Endothelial cell of umbilical vein (primary cell): ENCODE measurements at regions of chr16 and their contacts with region 1.

Region 1: GRCh38 chr16:81873843-81874752 is 95.0 kb downstream of the PLCG2 start:
- DNase-seq: peak; percentile 63
- H3K4me3 ChIP-seq: no peak overlapping the region
- H3K27ac ChIP-seq: no peak overlapping the region
- H3K4me1 ChIP-seq: peaks cover 11% of the 10 kb centered on the region
- H3K27me3 ChIP-seq: no peaks in the 10 kb centered on the region
- CTCF ChIP-seq: peak; percentile 76 to 81
- POLR2A ChIP-seq: no peak

Region 2: DNA sequence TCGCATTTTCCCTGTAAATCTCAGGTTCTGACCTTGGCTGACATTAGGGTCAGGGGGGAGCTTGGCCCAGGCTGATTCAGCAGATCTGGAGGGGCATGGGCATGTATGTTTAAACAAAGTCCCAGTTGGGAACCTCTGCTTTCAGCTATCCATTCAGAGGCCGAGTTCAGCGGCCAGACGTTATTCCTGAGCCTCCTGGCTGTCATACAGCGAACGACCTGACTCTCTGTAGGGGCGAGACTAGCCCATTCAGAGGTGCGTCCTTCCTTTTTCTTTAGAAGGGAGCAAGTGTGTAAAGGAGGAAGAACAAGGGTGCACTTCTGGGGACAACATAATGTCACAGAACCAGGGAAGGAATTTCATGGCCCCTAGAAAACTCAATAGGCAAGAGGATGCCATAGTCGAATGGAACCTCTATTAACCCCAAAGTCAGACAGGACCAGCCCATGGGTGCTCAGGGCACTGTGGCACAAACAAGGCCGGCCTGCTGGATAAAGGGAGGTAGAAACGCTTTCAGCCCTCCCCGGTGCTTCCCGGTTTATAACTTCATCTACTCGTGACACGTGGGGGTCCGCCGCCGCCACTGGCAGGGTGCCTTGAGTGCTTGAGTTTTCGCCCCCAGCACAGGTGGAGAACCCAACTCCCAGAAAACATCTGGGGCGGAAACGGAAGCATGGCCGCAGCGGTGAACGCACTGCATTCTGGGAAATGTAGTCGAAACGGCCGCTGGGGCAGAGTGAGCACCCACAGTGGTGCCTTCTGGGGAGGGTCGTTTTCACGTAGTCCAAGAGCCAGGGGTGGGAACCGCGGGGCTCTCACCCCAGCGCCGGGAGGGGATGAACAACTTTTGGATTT is 128.2 kb before region 1 on chr16:
- CTCF ChIA-PET with region 1: interaction called, 6 read pairs
- POLR2A ChIA-PET with region 1: no interaction called
- dilution Hi-C with region 1: no loop called
- intact Hi-C with region 1: loop called (anchors 2 kb)
- DNase-seq: peak; percentile 59
- H3K4me3 ChIP-seq: peak overlapping the region in 2 of 3 experiments; percentile 6 to 7
- H3K27ac ChIP-seq: no peak overlapping the region
- H3K4me1 ChIP-seq: peaks cover 5% of the 10 kb centered on the region
- H3K27me3 ChIP-seq: no peaks in the 10 kb centered on the region
- CTCF ChIP-seq: no peak
- POLR2A ChIP-seq: peak; percentile 38

Region 3: DNA sequence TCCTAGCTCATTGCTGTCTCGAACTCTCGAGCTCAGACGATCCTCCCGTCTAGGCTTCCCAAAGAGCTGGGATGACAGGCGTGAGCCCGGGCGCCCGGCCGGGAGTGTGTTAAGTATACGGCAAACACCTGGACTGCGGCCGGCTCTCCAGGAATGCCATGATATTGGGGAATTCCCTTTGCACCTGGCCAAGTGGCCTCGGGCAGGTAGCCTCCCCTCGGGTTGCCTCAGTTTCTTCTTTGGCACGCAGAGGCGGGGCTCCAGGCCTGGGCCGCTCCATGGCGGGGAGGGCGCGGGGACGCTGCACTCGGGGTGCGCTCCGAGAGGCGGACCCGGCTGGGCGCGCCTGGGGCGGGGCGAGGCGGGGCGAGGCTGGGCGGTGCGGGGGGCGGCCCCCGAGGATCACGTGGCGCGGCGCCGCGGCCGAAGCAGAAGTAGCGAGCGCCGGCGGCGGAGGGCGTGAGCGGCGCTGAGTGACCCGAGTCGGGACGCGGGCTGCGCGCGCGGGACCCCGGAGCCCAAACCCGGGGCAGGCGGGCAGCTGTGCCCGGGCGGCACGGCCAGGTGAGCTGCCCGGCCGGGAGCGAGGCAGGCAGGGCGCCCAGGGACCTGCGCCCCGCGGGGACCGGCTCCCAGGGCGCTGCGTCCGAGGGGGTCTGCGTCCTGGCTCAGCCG is 95.1 kb before region 1 on chr16 and contains the start of gene PLCG2:
- CTCF ChIA-PET with region 1: interaction called, 27 read pairs
- POLR2A ChIA-PET with region 1: no interaction called
- dilution Hi-C with region 1: no loop called
- intact Hi-C with region 1: loop called (anchors 1 kb)
- DNase-seq: peak; percentile 60
- H3K4me3 ChIP-seq: peak within 1 kb of the TSS; percentile 59 to 85 (median 70)
- H3K27ac ChIP-seq: no peak within 1 kb of the TSS
- H3K4me1 ChIP-seq: peaks cover 6% of the 10 kb centered on the region
- H3K27me3 ChIP-seq: peaks cover 5% of the 10 kb centered on the region in 2 experiments
- CTCF ChIP-seq: no peak
- POLR2A ChIP-seq: no peak
- total RNA-seq, gene PLCG2: 9.6 and 13.6 TPM in 2 replicates

Region 4: GRCh38 chr16:81863630-81864352 is 10.3 kb before region 1 on chr16:
- CTCF ChIA-PET with region 1: interaction called, 46 read pairs
- POLR2A ChIA-PET with region 1: no interaction called
- dilution Hi-C with region 1: no loop called
- intact Hi-C with region 1: no loop called
- DNase-seq: no peak
- H3K4me3 ChIP-seq: no peak overlapping the region
- H3K27ac ChIP-seq: no peak overlapping the region
- H3K4me1 ChIP-seq: peaks cover 25% of the 10 kb centered on the region
- H3K27me3 ChIP-seq: no peaks in the 10 kb centered on the region
- CTCF ChIP-seq: no peak
- POLR2A ChIP-seq: no peak

Region 5: DNA sequence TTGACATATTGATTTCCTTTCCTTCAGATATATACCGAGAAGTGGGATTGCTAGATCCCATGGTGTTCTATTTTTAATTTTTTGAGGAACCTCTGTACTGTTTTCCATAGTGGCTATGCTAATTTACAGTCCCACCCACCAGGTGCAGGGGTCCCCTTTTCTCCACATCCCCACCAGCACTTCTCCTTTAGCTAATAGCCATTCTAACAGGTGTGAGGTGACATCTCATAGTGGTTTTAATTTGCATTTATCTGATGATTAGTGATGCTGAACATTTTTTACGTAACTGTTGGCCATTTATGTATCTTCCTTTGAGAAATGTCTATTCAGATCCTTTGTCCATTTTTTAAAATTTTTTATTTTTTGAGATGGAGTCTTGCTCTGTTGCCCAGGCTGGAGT is 43.3 kb after region 1 on chr16:
- CTCF ChIA-PET with region 1: no interaction called
- POLR2A ChIA-PET with region 1: no interaction called
- dilution Hi-C with region 1: no loop called
- intact Hi-C with region 1: no loop called
- DNase-seq: no peak
- H3K4me3 ChIP-seq: no peak overlapping the region
- H3K27ac ChIP-seq: no peak overlapping the region
- H3K4me1 ChIP-seq: peaks cover 2% of the 10 kb centered on the region
- H3K27me3 ChIP-seq: no peaks in the 10 kb centered on the region
- CTCF ChIP-seq: no peak
- POLR2A ChIP-seq: no peak